BJ (cell line): ENCODE measurements at regions of chr2 and their contacts with region 1.

Region 1: GRCh38 chr2:172674034-172674967 is 61.3 kb upstream of the RAPGEF4 start:
- DNase-seq: no peak
- H3K4me3 ChIP-seq: no peak overlapping the region
- H3K27me3 ChIP-seq: no peaks in the 10 kb centered on the region
- CTCF ChIP-seq: peak; percentile 68

Region 2: GRCh38 chr2:172588931-172589330 is 85.4 kb before region 1 on chr2:
- CTCF ChIA-PET with region 1: interaction called, 11 read pairs
- POLR2A ChIA-PET with region 1: no interaction called
- DNase-seq: no peak
- H3K4me3 ChIP-seq: no peak overlapping the region
- H3K27me3 ChIP-seq: no peaks in the 10 kb centered on the region
- CTCF ChIP-seq: no peak

Region 3: DNA sequence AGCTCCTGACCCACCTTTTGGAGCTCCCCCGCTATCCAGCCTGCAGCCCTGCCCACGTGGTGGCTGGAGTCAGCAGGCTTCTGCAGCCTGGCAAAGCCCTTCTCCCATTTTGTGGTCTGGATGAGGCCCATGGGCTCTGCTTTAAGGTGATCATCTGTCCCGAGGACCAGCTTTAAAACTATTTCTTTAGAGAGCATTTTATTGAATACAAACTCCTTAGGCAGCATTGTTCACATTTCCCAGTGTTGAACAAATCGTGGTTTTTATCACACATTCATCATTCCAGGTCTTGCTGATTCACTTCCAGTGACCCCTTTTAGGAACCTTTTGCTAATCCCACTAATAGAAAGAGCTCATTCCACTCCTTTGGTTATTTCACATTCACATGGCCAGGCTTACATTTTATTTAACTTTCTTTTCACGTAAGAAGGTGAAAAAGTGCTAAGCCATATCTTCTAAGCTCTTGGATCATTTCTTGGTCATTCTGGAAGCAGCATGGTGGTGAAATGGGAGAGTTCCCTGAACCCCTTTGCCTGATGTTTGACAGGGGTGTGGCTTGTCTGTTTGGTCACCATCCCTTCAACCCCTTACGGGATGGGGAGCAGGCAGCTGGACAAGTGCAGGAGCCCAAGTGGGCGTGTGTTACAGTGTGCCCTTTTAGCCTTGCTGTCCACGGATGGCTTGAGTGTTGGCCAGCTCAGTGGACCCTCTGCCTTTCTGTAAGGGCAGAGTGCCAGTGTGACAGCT is 19.0 kb before region 1 on chr2:
- CTCF ChIA-PET with region 1: interaction called, 12 read pairs
- POLR2A ChIA-PET with region 1: no interaction called
- DNase-seq: peak; percentile 79
- H3K4me3 ChIP-seq: no peak overlapping the region
- H3K27me3 ChIP-seq: no peaks in the 10 kb centered on the region
- CTCF ChIP-seq: no peak